Psoas muscle (tissue), 8 donors: ENCODE measurements at regions of chr3 and their contacts with region 1.

Region 1: GRCh38 chr3:101724329-101725193 is at the start of gene CEP97:
- DNase-seq: peak; percentile 90 to 94
- ATAC-seq: peak; percentile 98 to 99 (median 99)
- H3K4me3 ChIP-seq: peak within 1 kb of the TSS; percentile 86
- H3K27ac ChIP-seq: peak within 1 kb of the TSS; percentile 79
- H3K4me1 ChIP-seq: peaks cover 20% of the 10 kb centered on the region
- H3K27me3 ChIP-seq: no peaks in the 10 kb centered on the region
- CTCF ChIP-seq: no peak
- total RNA-seq, gene CEP97: 5.9 to 12.5 (median 7.9) TPM

Region 2: GRCh38 chr3:101685870-101686412 is 38.6 kb before region 1 on chr3:
- intact Hi-C with region 1: loop called in 1 of 2 experiments (anchors 5 kb)
- DNase-seq: no peak
- ATAC-seq: peak; percentile 10 to 34 (median 17)
- H3K4me3 ChIP-seq: peak overlapping the region; percentile 78
- H3K27ac ChIP-seq: peak overlapping the region; percentile 92
- H3K4me1 ChIP-seq: peaks cover 33% of the 10 kb centered on the region
- H3K27me3 ChIP-seq: no peaks in the 10 kb centered on the region
- CTCF ChIP-seq: no peak

Region 3: GRCh38 chr3:101779047-101779821 is 54.7 kb after region 1 on chr3 and contains the start of gene NXPE3:
- intact Hi-C with region 1: loop called (anchors 2 to 5 kb)
- DNase-seq: peak; percentile 94 to 97
- ATAC-seq: peak; percentile 93 to 96 (median 95)
- H3K4me3 ChIP-seq: peak within 1 kb of the TSS; percentile 95
- H3K27ac ChIP-seq: peak within 1 kb of the TSS; percentile 95
- H3K4me1 ChIP-seq: peaks cover 38% of the 10 kb centered on the region
- H3K27me3 ChIP-seq: no peaks in the 10 kb centered on the region
- CTCF ChIP-seq: no peak
- total RNA-seq, gene NXPE3: 37.4 to 59.3 (median 45.6) TPM